Sciatic nerve (tissue), 2 donors: ENCODE measurements at regions of chr11 and their contacts with region 1.

Region 1: DNA sequence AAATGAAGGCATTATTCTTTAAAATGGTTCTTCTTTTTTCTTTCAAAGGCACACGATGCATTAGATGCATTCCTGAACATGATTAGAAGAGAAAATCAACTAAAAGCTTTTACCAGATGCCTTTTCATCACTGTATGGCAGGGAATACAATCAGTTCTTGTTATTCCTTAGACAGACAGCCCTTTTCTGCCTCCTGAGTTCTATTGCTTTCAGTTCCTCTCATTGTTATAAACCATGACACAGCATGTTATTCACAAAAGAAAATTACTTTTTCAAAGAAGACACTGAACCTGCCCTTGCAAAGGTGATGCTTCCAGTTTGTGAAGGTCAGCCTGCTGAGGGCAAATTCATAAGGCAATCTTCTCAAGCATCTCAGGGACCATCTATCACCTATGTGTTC is 70.1 kb downstream of the FAM181B start:
- DNase-seq: no peak
- ATAC-seq: no peak

Region 2: DNA sequence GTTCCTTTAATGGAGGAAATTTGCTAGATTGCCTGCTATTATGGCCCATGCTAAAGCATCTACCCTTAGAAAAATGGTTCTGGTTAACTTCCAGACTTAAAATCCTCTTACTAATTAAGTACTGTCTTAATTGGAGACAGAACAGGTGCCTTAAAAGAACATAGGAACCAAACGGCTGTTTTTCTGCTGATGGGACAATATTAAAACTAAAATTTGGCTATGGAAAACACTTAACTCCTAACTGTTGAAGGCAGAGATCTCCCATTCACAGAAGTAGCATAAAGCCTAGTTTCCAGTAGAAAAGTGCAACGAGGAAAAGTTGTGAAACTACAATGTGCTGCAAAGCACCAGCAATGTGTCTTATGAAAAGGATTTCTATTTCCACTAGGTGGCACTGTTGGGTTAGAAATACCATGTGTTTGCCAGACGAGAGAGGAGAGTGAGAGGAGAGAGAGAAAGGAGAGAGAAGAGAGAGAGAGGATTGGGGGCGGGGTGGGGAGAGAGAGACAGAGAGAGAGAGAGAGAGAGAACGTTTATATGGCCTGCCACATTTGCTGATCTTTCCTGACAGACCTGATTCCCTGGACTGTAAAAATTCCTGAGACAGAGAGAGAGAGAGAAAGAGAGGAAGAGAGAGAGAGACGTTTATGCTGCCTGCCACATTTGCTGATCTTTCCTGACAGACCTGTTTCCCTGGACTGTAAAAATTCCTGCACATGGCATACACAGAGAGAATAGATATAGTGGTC is 18.6 kb after region 1 on chr11:
- intact Hi-C with region 1: loop called (anchors 2 kb)
- DNase-seq: no peak
- ATAC-seq: peak; percentile 62